ENCODE measurements at regions of chr9 and their contacts with region 1.

Region 1: DNA sequence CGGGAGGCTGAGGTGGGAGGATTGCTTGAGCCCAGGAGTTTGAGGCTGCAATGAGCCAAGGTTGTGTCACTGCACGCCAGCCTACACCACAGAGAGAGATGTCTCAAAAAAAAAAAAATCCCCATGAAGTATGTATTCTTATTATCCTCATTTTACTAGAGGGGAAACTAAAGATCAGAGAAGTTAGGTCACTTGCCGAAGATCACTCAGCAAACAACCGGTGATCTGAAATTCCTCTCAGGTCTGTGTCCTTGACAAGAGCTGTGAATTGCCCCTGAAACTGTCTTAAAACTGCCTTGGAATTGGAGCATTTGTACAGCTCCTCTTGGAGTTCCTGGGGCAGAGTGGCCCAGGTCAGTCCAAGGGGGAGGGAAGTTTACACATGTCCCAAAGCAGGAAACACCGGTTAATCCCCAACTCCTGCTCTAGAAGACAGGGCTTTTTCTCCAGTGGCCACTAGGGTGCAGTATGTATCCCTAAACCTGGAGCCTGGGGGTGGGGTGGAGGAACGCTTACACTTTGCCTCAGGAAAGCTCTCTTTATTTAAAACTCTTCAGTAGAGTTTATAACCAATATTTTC is 27.6 kb downstream of the AQP7 start:
- DNase-seq: peak; percentile 77 to 92 (median 85)
- H3K4me3 ChIP-seq: peak overlapping the region in 1 of 4 donors; percentile 38
- H3K27ac ChIP-seq: peak overlapping the region in 1 of 5 donors; percentile 24
- H3K4me1 ChIP-seq: peaks cover 8 to 11% of the 10 kb centered on the region in 2 donors
- H3K27me3 ChIP-seq: no peaks in the 10 kb centered on the region
- CTCF ChIP-seq: peak; percentile 83 to 92 (median 88)
- POLR2A ChIP-seq: no peak

Region 2: GRCh38 chr9:33415501-33416038 is 40.8 kb after region 1 on chr9:
- intact Hi-C with region 1: loop called (anchors 5 kb)
- DNase-seq: peak; percentile 72 to 87 (median 80)
- H3K4me3 ChIP-seq: no peak overlapping the region
- H3K27ac ChIP-seq: no peak overlapping the region
- H3K4me1 ChIP-seq: no peaks in the 10 kb centered on the region
- H3K27me3 ChIP-seq: no peaks in the 10 kb centered on the region
- CTCF ChIP-seq: peak; percentile 42 to 79 (median 73)
- POLR2A ChIP-seq: no peak

Region 3: GRCh38 chr9:33452828-33453271 is 78.1 kb after region 1 on chr9:
- intact Hi-C with region 1: loop called in 1 of 2 experiments (anchors 10 kb)
- DNase-seq: peak in 6 of 7 donors; percentile 67 to 78 (median 74)
- H3K4me3 ChIP-seq: no peak overlapping the region
- H3K27ac ChIP-seq: no peak overlapping the region
- H3K4me1 ChIP-seq: peaks cover 0 to 2% of the 10 kb centered on the region in 2 donors
- H3K27me3 ChIP-seq: no peaks in the 10 kb centered on the region
- CTCF ChIP-seq: peak; percentile 34 to 63 (median 59)
- POLR2A ChIP-seq: no peak

Region 4: DNA sequence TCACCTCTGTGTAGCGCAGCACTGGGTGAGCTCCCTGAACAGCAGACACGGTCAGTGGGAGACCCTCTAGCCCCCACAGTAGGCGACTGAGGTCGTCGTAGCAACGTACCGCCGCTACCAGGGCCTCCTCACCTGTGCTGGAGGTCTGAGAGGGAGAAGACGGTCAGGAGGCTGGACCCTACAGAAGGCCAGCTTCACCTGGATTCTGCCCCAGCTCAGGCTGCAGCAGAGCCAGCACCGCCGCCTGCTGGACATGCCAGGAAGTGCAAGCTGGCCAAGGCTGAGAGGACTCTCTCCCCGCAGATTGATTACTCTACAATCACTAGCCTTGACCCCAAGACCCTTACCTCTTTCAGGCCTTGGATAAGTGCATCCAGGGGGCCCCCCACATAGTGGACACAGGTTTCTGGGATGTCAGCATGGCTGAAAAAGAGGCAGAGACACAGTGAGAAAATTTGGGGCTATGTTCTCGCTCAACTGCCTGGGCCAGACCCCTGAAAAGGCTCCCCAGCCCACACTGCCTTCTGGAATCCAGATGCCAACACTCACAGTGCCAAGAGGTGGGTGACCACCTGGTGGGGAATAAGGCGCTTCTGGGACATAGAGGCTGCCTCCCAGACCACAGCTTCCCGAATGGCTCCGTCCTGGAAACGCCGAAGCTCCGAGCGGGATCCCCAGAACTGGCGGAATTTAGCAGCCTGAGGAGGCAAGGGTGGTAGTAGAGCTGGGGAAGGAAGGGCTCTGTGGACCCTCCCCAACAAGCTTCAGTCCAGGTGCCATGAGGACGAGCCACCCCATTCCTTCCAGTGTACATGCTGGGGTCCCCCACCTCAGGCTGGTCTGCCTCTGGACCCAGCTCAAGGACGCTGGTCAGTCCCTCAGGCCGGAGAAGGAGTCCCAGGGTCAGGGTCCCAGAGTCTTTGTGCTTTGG is 92.1 kb after region 1 on chr9:
- intact Hi-C with region 1: loop called in 1 of 2 experiments (anchors 10 kb)
- DNase-seq: peak; percentile 43 to 82 (median 68)
- H3K4me3 ChIP-seq: no peak overlapping the region
- H3K27ac ChIP-seq: no peak overlapping the region
- H3K4me1 ChIP-seq: no peaks in the 10 kb centered on the region
- H3K27me3 ChIP-seq: no peaks in the 10 kb centered on the region
- CTCF ChIP-seq: peak; percentile 85 to 89 (median 88)
- POLR2A ChIP-seq: no peak

Measured in adrenal gland (tissue), 19 donors.